HepG2 (cell line): ENCODE measurements at regions of chr18 and their contacts with region 1.

Region 1: GRCh38 chr18:26621161-26622026 is 73.0 kb upstream of the KCTD1 start:
- DNase-seq: peak; percentile 21
- ATAC-seq: peak; percentile 95
- H3K4me3 ChIP-seq: peak overlapping the region in 2 of 3 experiments; percentile 35 to 56; a peak in 4 of 6 replicates
- H3K27ac ChIP-seq: no peak overlapping the region
- H3K4me1 ChIP-seq: no peaks in the 10 kb centered on the region
- H3K27me3 ChIP-seq: no peaks in the 10 kb centered on the region
- CTCF ChIP-seq: peak; percentile 80
- EP300 ChIP-seq: no peak
- POLR2A ChIP-seq: no peak
- RAD21 ChIP-seq: peak; percentile 46; the same call in 1 of the 2 replicates

Region 2: GRCh38 chr18:26468931-26469340 is 152.5 kb before region 1 on chr18:
- CTCF ChIA-PET with region 1: no interaction called
- POLR2A ChIA-PET with region 1: no interaction called
- in situ Hi-C with region 1: no loop called
- intact Hi-C with region 1: loop called (anchors 1 kb)
- DNase-seq: peak; percentile 36
- ATAC-seq: peak; percentile 99
- H3K4me3 ChIP-seq: no peak overlapping the region
- H3K27ac ChIP-seq: no peak overlapping the region
- H3K4me1 ChIP-seq: no peaks in the 10 kb centered on the region
- H3K27me3 ChIP-seq: no peaks in the 10 kb centered on the region
- CTCF ChIP-seq: peak; percentile 47
- EP300 ChIP-seq: no peak
- POLR2A ChIP-seq: no peak
- RAD21 ChIP-seq: no peak

Region 3: DNA sequence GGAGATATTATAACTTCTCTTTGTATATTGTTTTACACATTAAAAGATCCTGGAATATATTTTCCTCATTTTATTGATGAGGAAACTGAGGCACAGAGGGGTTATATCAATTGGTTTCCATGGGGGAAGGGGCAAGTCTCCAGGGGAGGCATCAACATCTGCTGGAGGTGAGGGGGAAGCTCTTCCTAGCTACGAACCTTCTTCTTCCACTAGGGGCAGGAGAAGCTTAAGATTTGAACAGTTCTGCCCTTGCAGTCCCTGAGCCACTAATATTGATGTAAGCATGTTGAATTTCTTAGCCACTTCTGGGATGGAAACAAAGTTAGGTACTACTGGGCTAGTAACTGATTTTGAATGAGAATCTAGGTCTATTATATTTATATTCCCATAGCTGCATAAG is 384.2 kb after region 1 on chr18:
- CTCF ChIA-PET with region 1: no interaction called
- POLR2A ChIA-PET with region 1: no interaction called
- in situ Hi-C with region 1: no loop called
- intact Hi-C with region 1: loop called (anchors 10 kb)
- DNase-seq: peak; percentile 22
- ATAC-seq: peak; percentile 83
- H3K4me3 ChIP-seq: no peak overlapping the region
- H3K27ac ChIP-seq: no peak overlapping the region
- H3K4me1 ChIP-seq: no peaks in the 10 kb centered on the region
- H3K27me3 ChIP-seq: no peaks in the 10 kb centered on the region
- CTCF ChIP-seq: peak; percentile 43; the same call in 1 of the 2 replicates
- EP300 ChIP-seq: no peak
- POLR2A ChIP-seq: no peak
- RAD21 ChIP-seq: no peak